ENCODE measurements at regions of chr16 and their contacts with region 1.

Region 1: DNA sequence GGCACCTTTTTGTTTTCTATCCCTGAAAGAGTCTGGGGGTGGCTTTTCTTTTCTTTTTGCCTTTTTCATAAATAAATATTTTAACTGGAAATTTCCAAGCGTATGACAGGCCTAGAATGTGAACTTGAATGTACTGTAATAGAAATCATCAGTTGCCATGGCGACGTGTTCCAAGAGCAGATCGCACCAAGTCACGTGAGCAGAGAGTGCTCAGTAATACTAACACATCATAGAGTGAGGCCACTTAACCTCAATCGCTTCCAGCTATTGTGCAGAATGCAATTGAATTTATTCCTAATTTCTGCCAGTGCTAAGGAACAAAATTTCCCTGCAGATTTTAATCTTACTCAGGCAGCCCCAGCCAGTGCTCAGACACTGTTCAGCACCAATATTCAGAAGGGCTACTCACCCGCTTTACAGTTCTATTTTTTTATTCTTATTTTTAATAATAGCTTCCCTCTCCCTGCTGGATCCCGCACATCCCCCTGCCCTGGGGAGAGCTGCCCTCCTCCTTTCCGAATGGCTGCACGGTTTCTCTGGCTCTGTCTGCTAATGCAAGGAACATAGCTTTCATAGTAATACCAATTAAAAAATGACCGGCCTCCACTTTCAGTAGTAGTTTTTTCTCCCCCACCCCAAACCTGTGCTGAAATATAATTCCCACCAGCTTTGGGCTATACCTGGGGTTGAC is 26.2 kb upstream of the PMFBP1 start:
- DNase-seq: peak; percentile 68
- H3K4me3 ChIP-seq: peak overlapping the region in 1 of 2 experiments; percentile 25; a peak in 1 of 4 replicates
- H3K27ac ChIP-seq: peak overlapping the region; percentile 41 to 100; a peak in 3 of 4 replicates
- H3K4me1 ChIP-seq: peaks cover 4 to 45% of the 10 kb centered on the region in 2 experiments; a peak in 3 of 4 replicates
- H3K27me3 ChIP-seq: no peaks in the 10 kb centered on the region
- CTCF ChIP-seq: no peak
- EP300 ChIP-seq: peak in 1 of 2 experiments; percentile 95; a peak in 2 of 4 replicates
- RAD21 ChIP-seq: peak; percentile 37

Region 2: GRCh38 chr16:71709231-71709781 is 488.9 kb before region 1 on chr16:
- CTCF ChIA-PET with region 1: no interaction called
- POLR2A ChIA-PET with region 1: no interaction called
- DNase-seq: no peak
- H3K4me3 ChIP-seq: no peak overlapping the region
- H3K27ac ChIP-seq: peak overlapping the region; percentile 29 to 55
- H3K4me1 ChIP-seq: peaks cover 4 to 20% of the 10 kb centered on the region in 2 experiments; a peak in 3 of 4 replicates
- H3K27me3 ChIP-seq: no peaks in the 10 kb centered on the region
- CTCF ChIP-seq: no peak
- EP300 ChIP-seq: no peak
- RAD21 ChIP-seq: no peak

Region 3: GRCh38 chr16:72182976-72183375 is 15.2 kb before region 1 on chr16:
- CTCF ChIA-PET with region 1: interaction called, 28 read pairs
- POLR2A ChIA-PET with region 1: no interaction called
- DNase-seq: no peak
- H3K4me3 ChIP-seq: no peak overlapping the region
- H3K27ac ChIP-seq: no peak overlapping the region
- H3K4me1 ChIP-seq: no peaks in the 10 kb centered on the region
- H3K27me3 ChIP-seq: no peaks in the 10 kb centered on the region; the same call in 1 of the 2 replicates
- CTCF ChIP-seq: no peak
- EP300 ChIP-seq: no peak
- RAD21 ChIP-seq: no peak

Region 4: DNA sequence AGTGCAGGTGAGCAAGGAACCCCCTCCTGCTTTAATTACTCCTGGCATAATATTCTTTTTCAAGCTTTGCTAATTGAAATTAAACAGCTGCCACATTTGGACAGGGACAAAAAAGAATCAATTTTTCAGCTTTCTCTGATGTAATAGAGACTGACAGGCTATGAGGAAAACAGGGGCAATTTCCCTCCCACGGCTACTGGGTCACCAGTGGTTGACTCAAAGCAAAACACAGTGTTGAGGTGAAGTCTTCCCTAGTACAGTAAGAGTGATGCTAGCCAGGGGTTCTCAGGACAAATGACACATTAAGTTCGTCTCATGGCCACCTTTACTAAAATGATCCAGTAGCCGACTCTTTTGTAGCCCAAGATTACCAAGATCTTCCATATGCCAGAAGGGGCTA is 12.4 kb after region 1 on chr16:
- CTCF ChIA-PET with region 1: interaction called, 3 read pairs
- POLR2A ChIA-PET with region 1: interaction called, 26 read pairs
- DNase-seq: no peak
- H3K4me3 ChIP-seq: no peak overlapping the region
- H3K27ac ChIP-seq: peak overlapping the region in 1 of 2 experiments; percentile 77; a peak in 2 of 4 replicates
- H3K4me1 ChIP-seq: peaks cover 0 to 19% of the 10 kb centered on the region in 2 experiments; a peak in 2 of 4 replicates
- H3K27me3 ChIP-seq: no peaks in the 10 kb centered on the region
- CTCF ChIP-seq: no peak
- EP300 ChIP-seq: no peak
- RAD21 ChIP-seq: no peak

Region 5: DNA sequence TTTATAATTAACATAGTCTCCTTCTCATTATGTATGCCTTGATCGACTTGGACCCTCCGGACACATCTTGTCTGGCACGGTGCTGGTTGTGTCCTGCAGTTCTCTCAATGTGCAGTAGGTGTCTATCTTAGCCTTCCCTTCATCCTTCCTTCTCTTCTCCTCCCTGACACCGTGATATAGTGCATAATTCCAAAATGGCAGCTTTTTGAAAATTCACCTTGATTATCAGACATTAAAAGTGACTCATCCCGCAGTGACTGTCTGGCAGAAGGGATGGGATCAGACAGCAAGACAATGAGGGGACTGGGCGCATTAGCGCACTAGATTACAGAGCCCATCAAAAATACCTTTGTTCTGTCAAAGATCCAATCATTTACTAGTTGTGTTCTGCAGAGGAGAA is 43.8 kb after region 1 on chr16:
- CTCF ChIA-PET with region 1: interaction called, 28 read pairs
- POLR2A ChIA-PET with region 1: interaction called, 3 read pairs
- DNase-seq: peak; percentile 52
- H3K4me3 ChIP-seq: no peak overlapping the region
- H3K27ac ChIP-seq: peak overlapping the region in 1 of 2 experiments; percentile 76; a peak in 2 of 4 replicates
- H3K4me1 ChIP-seq: peaks cover 0 to 22% of the 10 kb centered on the region in 2 experiments; a peak in 2 of 4 replicates
- H3K27me3 ChIP-seq: no peaks in the 10 kb centered on the region
- CTCF ChIP-seq: peak; percentile 91
- EP300 ChIP-seq: no peak
- RAD21 ChIP-seq: peak; percentile 96

Region 6: DNA sequence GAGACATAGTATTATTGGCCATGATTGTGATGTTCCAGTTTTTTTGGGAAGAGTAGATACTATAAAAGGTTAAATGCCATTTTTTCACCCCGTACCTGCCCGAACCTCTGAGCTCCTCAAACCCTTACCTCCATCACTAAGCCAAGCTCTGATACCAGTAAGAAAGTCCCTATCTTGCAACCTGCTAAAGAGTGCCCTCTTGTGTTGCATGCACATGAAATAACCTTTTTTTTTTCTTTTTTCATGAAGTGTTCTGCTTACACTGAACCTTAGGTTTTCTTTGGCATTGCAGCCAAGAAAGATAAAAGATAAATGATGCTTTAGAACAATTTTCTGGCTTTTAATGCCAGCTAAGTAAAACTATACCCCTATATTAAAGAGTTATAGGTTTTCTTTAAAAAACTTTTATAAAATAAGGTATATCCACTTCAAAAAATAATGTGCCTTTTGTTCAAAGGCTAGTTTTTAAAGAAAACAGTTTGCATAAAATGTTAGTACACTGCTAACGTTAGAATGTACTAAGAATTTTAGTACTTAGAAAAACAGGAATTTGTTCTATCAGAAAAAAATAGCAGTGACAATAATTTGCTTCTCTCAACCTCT is 269.1 kb after region 1 on chr16:
- CTCF ChIA-PET with region 1: interaction called, 32 read pairs
- POLR2A ChIA-PET with region 1: no interaction called
- DNase-seq: peak; percentile 37
- H3K4me3 ChIP-seq: no peak overlapping the region; a peak in 1 of 4 replicates
- H3K27ac ChIP-seq: no peak overlapping the region
- H3K4me1 ChIP-seq: no peaks in the 10 kb centered on the region; a peak in 1 of 4 replicates
- H3K27me3 ChIP-seq: no peaks in the 10 kb centered on the region
- CTCF ChIP-seq: peak; percentile 77
- EP300 ChIP-seq: no peak
- RAD21 ChIP-seq: peak; percentile 85

Measured in SK-N-SH (cell line).